Endothelial cell of umbilical vein (primary cell): ENCODE measurements at regions of chr20 and their contacts with region 1.

Region 1: GRCh38 chr20:504632-505075 is 38.9 kb downstream of the CSNK2A1 start:
- DNase-seq: no peak
- H3K4me3 ChIP-seq: no peak overlapping the region
- H3K27ac ChIP-seq: no peak overlapping the region
- H3K4me1 ChIP-seq: no peaks in the 10 kb centered on the region
- H3K27me3 ChIP-seq: no peaks in the 10 kb centered on the region
- CTCF ChIP-seq: no peak
- POLR2A ChIP-seq: no peak

Region 2: DNA sequence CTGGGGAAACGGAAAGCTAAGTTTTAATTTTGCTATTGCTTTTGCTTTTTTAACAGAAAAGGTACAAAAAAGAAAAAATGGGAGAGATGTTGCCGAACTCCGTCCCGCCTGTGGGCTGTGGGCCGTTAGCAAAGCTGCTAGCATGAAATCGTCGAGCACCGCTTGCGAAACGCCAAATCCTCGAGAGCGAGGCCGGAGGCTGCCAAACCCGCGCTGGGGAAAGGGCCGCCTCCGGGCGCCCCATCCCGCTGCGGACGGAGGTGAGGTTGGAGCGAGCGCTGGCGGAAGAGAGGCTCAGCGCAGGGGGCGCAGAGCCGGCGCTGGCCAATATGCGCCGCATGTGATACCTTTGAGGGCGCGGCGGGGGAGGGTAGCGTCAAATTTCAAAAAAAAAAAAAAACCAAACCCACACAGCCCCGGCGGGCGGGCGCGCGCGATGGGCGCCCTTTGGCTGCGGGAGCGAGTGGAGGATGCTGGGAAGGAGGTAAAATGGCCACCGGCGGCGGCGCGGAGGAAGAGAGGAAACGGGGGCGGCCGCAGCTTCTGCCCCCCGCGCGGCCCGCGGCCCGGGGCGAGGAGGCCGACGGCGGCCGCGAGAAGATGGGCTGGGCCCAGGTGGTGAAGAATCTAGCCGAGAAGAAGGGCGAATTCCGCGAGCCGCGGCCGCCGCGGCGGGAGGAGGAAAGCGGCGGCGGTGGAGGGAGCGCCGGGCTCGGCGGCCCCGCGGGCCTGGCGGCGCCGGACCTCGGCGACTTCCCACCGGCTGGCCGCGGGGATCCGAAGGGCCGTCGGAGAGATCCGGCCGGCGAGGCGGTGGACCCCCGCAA is 207.3 kb before region 1 on chr20 and contains the start of gene ZCCHC3:
- CTCF ChIA-PET with region 1: no interaction called
- POLR2A ChIA-PET with region 1: no interaction called
- dilution Hi-C with region 1: no loop called
- intact Hi-C with region 1: no loop called
- DNase-seq: peak; percentile 88
- H3K4me3 ChIP-seq: peak within 1 kb of the TSS; percentile 53 to 78 (median 63)
- H3K27ac ChIP-seq: peak within 1 kb of the TSS; percentile 83
- H3K4me1 ChIP-seq: peaks cover 33% of the 10 kb centered on the region
- H3K27me3 ChIP-seq: no peaks in the 10 kb centered on the region
- CTCF ChIP-seq: peak in 1 of 2 donors; percentile 17
- POLR2A ChIP-seq: peak; percentile 79
- total RNA-seq, gene ZCCHC3: 22.0 and 24.1 TPM in 2 replicates

Region 3: GRCh38 chr20:391041-391711 is 113.5 kb before region 1 on chr20:
- CTCF ChIA-PET with region 1: no interaction called
- POLR2A ChIA-PET with region 1: no interaction called
- dilution Hi-C with region 1: no loop called
- intact Hi-C with region 1: no loop called
- DNase-seq: no peak
- H3K4me3 ChIP-seq: no peak overlapping the region
- H3K27ac ChIP-seq: no peak overlapping the region
- H3K4me1 ChIP-seq: no peaks in the 10 kb centered on the region
- H3K27me3 ChIP-seq: no peaks in the 10 kb centered on the region
- CTCF ChIP-seq: no peak
- POLR2A ChIP-seq: no peak

Region 4: GRCh38 chr20:517221-517620 is 12.6 kb after region 1 on chr20:
- CTCF ChIA-PET with region 1: interaction called, 12 read pairs
- POLR2A ChIA-PET with region 1: no interaction called
- dilution Hi-C with region 1: no loop called
- intact Hi-C with region 1: no loop called
- DNase-seq: peak; percentile 19
- H3K4me3 ChIP-seq: no peak overlapping the region
- H3K27ac ChIP-seq: no peak overlapping the region
- H3K4me1 ChIP-seq: no peaks in the 10 kb centered on the region
- H3K27me3 ChIP-seq: no peaks in the 10 kb centered on the region
- CTCF ChIP-seq: no peak
- POLR2A ChIP-seq: no peak

Region 5: DNA sequence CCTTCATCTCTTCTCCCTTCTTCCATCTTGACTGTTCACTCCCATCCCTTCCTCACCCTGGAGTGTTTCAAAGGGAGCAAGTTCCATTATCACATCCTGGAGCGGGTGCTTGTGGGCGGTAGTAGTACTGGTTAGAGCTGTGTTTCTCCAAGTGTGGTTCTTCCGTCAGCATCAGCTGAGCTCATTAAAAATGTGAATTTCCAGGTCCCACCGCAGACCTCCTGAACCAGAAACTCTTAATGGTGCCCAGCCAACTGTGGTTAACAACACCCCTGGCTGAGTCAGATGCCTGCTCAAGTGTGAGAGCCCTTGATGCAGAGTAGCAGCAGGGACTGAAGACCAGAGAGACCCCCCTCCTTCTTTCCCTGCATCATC is 387.0 kb after region 1 on chr20:
- CTCF ChIA-PET with region 1: no interaction called
- POLR2A ChIA-PET with region 1: no interaction called
- dilution Hi-C with region 1: no loop called
- intact Hi-C with region 1: no loop called
- DNase-seq: no peak
- H3K4me3 ChIP-seq: no peak overlapping the region
- H3K27ac ChIP-seq: no peak overlapping the region
- H3K4me1 ChIP-seq: no peaks in the 10 kb centered on the region
- H3K27me3 ChIP-seq: peaks cover 4 to 5% of the 10 kb centered on the region in 2 experiments
- CTCF ChIP-seq: no peak
- POLR2A ChIP-seq: no peak